ENCODE measurements at regions of chr5 and their contacts with region 1.

Region 1: DNA sequence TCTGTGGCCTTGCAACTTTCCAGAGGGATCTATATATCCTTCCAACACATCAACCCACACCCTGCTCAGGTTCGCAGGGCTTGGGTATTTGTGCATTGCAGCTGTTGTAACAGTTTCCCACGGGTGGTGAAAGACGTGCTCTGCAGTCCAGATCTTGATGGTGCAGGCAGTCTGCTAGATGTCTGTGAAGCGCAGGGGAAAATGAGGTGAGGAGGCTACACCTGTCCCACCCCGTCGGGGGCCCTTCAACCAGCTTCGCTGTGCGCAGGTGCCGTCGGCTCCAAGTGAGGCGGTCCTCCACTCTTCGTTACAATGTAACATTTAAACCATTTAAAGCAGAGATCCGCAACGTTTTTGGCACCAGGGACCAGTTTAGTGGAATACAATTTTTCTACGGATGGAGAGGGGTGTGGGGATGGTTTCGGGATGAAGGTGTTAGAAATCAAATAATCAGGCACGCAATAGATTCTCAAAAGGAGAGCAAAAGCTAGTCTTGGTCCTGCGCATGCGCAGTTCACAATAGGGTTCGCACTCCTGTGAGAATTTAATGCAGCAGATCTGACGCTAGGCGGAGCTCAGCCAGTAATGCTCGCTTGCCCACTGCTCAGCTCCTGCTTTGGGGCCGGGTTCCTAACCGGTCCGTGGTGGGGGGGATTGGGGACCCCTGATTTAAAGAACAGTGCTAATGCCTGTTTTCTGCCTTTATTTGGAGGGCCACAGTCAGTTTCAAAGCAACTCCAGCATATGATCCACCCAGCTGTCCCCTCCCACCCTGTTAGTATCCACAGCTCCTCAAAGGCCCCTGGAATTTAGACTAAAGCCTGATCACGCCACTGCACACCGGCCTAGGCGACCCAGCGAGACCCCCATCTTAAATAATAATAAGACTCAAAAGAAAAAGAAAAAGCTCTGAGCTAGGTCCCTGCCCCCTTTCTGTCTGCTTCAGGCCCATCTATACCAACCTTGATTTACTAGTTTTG is 97.1 kb upstream of the SELENOP start:
- DNase-seq: peak; percentile 71
- ATAC-seq: peak; percentile 94
- H3K4me3 Mint-ChIP-seq: peak overlapping the region; percentile 93
- H3K27ac Mint-ChIP-seq: peak overlapping the region; percentile 84
- H3K4me1 Mint-ChIP-seq: peaks cover 12% of the 10 kb centered on the region
- H3K27me3 Mint-ChIP-seq: peaks cover 11% of the 10 kb centered on the region
- CTCF ChIP-seq: peak; percentile 50

Region 2: DNA sequence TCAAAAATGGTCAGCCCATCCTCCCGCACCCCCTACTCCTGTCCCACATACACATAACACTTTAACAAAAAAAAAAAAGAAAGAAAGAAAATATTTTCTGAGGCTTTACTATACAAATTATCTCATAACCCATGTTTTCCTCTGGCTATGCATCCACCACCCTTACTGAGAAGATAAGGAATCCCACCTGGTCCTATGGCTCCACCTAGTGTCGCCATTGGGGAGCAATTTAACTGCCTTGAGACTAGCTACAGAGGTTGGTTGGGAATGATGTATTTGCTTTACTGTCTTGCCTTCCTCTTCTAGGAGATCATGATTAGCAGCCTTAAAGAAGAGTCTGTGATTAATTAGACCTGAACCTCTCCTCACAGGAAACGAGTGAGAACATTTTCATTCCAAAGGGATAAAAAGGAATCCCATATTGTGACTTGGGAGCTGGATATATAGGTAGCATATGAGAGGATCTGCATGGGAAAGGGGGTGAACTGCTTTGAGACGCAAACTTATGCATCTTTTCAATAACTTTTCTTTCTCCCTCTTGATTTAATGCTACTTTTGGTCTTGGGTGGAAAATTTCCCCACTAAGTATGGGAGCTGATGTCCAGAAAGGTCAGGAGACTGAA is 19.4 kb before region 1 on chr5:
- CTCF ChIA-PET with region 1: interaction called, 10 read pairs
- POLR2A ChIA-PET with region 1: no interaction called
- intact Hi-C with region 1: no loop called
- DNase-seq: no peak
- ATAC-seq: peak; percentile 60
- H3K4me3 Mint-ChIP-seq: no peak overlapping the region
- H3K27ac Mint-ChIP-seq: no peak overlapping the region
- H3K4me1 Mint-ChIP-seq: no peaks in the 10 kb centered on the region
- H3K27me3 Mint-ChIP-seq: peaks cover 11% of the 10 kb centered on the region
- CTCF ChIP-seq: peak; percentile 69

Region 3: DNA sequence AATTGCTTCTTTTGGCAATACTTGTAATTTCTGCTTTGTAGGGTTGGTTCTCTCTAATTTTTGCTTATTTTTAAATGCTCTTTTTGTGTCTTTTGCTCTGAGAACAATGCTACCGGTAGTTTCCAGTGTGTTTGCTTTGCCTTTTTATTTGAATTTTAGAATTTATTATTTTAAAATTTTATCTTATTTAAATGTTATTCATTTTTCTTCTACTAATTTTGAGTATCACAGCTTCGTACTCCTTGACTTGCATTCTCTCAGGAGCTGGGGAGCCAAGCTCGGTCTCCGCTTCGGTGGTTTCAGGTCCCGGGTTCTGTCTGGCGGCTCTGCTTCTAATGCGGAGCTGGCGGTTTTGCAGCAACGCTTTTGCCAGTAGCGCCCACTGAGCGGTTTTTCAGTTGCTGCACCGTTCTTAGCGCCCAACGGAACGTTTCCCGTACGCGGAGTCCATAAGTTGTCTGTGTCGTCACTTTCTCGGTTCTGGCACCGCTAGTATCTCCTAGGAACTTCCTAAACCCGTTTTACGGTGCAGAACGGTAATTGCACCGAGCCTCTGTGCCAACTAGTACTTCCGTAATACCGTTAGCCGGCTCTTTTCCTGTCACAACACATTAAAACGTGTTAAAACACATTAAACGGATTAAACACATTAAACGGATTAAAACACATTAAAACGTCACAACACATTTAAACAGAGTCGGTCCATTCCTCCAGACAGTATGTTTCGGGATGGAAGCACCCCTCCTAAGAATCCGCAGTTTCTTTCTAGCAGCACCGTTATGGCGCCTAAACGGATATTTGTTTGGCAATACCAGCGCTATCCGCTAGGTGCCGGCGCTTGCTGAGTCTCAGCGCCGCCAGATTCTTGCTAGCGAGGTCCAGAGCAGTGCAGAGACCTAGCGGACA is 85.7 kb after region 1 on chr5:
- CTCF ChIA-PET with region 1: interaction called, 16 read pairs
- POLR2A ChIA-PET with region 1: interaction called, 38 read pairs
- intact Hi-C with region 1: loop called (anchors 1 kb)
- DNase-seq: peak; percentile 72
- ATAC-seq: peak; percentile 66
- H3K4me3 Mint-ChIP-seq: peak overlapping the region; percentile 99
- H3K27ac Mint-ChIP-seq: peak overlapping the region; percentile 100
- H3K4me1 Mint-ChIP-seq: peaks cover 34% of the 10 kb centered on the region
- H3K27me3 Mint-ChIP-seq: peaks cover under 1% of the 10 kb centered on the region
- CTCF ChIP-seq: peak; percentile 89

Region 4: DNA sequence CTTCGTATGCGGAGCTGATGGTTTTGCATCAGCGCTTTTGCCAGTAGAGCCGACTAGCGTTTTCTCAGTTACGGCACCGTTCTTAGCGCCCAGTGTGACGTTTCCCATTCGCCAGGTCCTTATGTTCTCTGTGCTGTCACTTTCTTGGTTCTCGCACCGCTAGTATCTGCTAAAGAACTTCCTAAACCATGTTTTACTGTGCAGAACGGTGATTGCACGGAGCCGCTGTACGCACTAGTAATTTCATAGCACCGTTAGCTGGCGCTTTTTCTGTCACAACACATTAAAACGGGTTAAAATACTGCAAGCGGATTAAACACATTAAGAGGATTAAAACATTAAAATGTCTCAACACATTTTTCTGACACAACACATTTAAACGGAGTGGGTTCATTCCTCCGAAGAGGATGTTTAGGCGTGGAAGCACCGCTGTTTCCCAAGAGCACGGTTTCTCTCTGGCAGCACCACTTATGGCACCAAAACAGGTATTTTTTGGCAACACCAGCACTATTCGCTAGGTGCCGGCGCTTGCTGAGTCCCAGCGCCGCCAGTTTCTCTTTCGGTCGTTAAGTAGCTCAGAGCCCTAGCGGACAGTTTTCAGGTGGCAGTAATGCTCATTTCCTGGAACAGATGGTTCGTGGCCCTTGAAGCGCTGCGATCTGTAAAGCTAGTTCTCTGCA is 111.0 kb after region 1 on chr5:
- CTCF ChIA-PET with region 1: interaction called, 10 read pairs
- POLR2A ChIA-PET with region 1: interaction called, 17 read pairs
- intact Hi-C with region 1: no loop called
- DNase-seq: peak; percentile 61
- ATAC-seq: peak; percentile 64
- H3K4me3 Mint-ChIP-seq: peak overlapping the region; percentile 97
- H3K27ac Mint-ChIP-seq: peak overlapping the region; percentile 100
- H3K4me1 Mint-ChIP-seq: peaks cover 39% of the 10 kb centered on the region
- H3K27me3 Mint-ChIP-seq: no peaks in the 10 kb centered on the region
- CTCF ChIP-seq: no peak

Region 5: GRCh38 chr5:43105369-43106289 is 196.8 kb after region 1 on chr5:
- CTCF ChIA-PET with region 1: interaction called, 23 read pairs
- POLR2A ChIA-PET with region 1: no interaction called
- intact Hi-C with region 1: loop called (anchors 1 kb)
- DNase-seq: peak; percentile 73
- ATAC-seq: peak; percentile 99
- H3K4me3 Mint-ChIP-seq: peak overlapping the region; percentile 83
- H3K27ac Mint-ChIP-seq: peak overlapping the region; percentile 80
- H3K4me1 Mint-ChIP-seq: peaks cover 7% of the 10 kb centered on the region
- H3K27me3 Mint-ChIP-seq: peaks cover 2% of the 10 kb centered on the region
- CTCF ChIP-seq: peak; percentile 100

Region 6: DNA sequence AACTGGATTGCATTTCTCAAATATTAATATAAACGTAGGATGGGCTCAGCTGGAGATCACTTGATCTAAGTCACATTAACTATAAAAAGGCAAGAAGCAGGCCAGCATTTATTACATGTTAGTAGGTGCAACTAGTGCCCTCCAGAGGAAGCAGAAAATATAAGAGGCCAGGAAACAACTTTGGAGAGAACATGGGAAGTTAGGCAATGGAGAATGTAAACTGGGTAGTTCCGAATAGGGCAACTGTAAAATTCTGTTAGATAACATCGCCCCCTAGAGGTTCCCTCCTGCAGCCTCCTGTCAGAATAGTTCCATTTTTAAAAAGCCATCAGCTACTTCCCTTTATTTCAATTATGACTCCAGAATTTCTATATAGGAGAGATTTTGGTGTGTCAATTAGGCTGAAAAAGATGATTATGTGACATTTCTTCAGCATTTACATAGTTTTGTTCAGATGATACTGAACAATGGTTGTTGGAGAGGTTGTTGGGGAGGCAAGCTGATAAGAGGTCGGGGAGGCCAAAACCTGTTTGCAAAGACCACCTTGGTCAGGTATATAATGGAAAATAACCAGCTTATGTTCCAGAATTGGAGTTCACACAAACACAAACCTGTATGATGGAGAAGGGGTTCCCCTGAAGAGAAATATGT is 481.0 kb after region 1 on chr5:
- CTCF ChIA-PET with region 1: interaction called, 8 read pairs
- POLR2A ChIA-PET with region 1: no interaction called
- intact Hi-C with region 1: loop called (anchors 1 kb)
- DNase-seq: no peak
- ATAC-seq: peak; percentile 84
- H3K4me3 Mint-ChIP-seq: no peak overlapping the region
- H3K27ac Mint-ChIP-seq: peak overlapping the region; percentile 30
- H3K4me1 Mint-ChIP-seq: peaks cover 16% of the 10 kb centered on the region
- H3K27me3 Mint-ChIP-seq: no peaks in the 10 kb centered on the region
- CTCF ChIP-seq: peak; percentile 64